ENCODE measurements at regions of chr3 and their contacts with region 1.

Region 1: DNA sequence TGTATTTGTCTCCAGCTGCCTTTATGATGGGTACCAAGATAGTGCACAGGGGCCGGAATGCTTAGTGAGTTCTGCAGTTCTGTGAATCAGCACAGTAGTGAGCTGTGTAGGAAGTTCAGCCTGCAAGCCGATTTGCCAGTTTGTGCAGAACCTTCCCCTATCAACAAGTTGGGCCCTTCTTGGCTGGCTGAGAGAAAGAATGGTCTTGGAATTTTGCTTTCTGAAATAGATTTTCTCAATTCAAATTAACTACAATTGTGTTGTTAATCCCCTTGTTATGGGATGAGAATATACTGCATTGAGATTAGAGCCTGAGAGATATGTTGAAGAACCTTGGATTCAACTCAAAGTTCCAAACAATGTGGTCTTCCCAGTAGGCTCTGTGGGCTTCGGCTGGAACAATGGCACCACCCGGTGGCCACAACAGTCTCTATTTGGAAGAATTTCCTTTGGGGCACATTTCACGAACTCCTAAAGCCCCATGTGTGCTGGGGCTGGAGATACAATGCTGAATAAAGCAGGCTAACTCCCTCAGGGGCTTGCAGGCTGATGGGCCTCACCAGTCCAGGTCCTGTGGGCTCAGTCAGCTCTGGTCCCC is 59.1 kb downstream of the TRIM42 start:
- DNase-seq: peak; percentile 59
- ATAC-seq: peak; percentile 97
- H3K4me3 ChIP-seq: no peak overlapping the region
- H3K27ac ChIP-seq: no peak overlapping the region
- H3K4me1 ChIP-seq: 0 out of 2 replicates have a peak, but pooled peaks cover 12% of the 10 kb centered on the region
- H3K27me3 ChIP-seq: no peaks in the 10 kb centered on the region; a peak in 1 of 5 replicates
- CTCF ChIP-seq: peak; percentile 92
- EP300 ChIP-seq: no peak
- POLR2A ChIP-seq: no peak
- RAD21 ChIP-seq: peak; percentile 95

Region 2: DNA sequence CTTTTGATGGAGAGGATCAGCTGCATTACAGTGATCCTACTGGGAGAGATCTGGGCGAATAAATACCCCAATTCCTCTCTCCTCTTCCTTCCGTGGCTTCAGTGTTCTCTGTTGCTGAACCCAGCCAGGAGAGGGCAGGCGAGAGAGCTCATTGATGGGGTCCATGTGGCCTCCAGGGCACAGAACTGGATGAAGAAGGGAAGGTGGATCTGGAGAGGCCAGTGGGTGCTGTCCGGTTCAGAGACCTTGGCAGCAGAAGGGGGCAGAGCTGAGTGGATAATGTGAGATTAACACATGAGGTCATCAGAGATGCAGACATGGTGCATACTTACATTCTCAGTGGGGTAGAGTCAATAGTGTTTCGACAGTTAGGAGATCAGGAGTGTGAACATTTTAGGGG is 608.3 kb before region 1 on chr3:
- CTCF ChIA-PET with region 1: interaction called, 11 read pairs
- POLR2A ChIA-PET with region 1: no interaction called
- in situ Hi-C with region 1: loop called (anchors 10 kb)
- intact Hi-C with region 1: loop called (anchors 1 kb)
- DNase-seq: peak; percentile 25
- ATAC-seq: peak; percentile 98
- H3K4me3 ChIP-seq: no peak overlapping the region
- H3K27ac ChIP-seq: no peak overlapping the region
- H3K4me1 ChIP-seq: no peaks in the 10 kb centered on the region
- H3K27me3 ChIP-seq: no peaks in the 10 kb centered on the region
- CTCF ChIP-seq: peak; percentile 78
- EP300 ChIP-seq: no peak
- POLR2A ChIP-seq: no peak
- RAD21 ChIP-seq: peak; percentile 52; the same call in 1 of the 2 replicates

Region 3: DNA sequence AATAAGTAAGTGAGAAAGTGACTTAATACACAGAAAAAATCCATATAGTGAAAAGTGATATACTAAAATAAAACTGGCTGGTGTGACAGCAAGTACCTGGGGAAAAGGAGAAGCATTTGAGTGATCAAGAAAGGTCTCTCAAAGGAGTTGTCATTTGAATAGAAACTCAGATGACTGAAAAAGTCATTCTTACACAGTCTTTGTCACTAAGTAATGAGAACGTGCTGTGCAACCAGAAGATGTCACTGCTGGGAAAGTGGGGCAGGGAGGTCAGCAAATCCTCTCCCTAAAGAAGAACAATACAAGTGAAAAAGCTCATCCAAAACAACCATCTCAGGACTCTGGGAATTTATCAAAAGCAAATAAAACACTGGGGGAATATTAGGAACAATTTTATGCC is 376.6 kb before region 1 on chr3:
- CTCF ChIA-PET with region 1: no interaction called
- POLR2A ChIA-PET with region 1: no interaction called
- in situ Hi-C with region 1: no loop called
- intact Hi-C with region 1: loop called (anchors 1 kb)
- DNase-seq: no peak
- ATAC-seq: no peak
- H3K4me3 ChIP-seq: no peak overlapping the region
- H3K27ac ChIP-seq: no peak overlapping the region
- H3K4me1 ChIP-seq: no peaks in the 10 kb centered on the region
- H3K27me3 ChIP-seq: no peaks in the 10 kb centered on the region
- CTCF ChIP-seq: peak; percentile 25; the same call in 1 of the 2 replicates
- EP300 ChIP-seq: no peak
- POLR2A ChIP-seq: no peak
- RAD21 ChIP-seq: no peak

Region 4: GRCh38 chr3:140552898-140553297 is 184.1 kb before region 1 on chr3:
- CTCF ChIA-PET with region 1: interaction called, 10 read pairs
- POLR2A ChIA-PET with region 1: no interaction called
- in situ Hi-C with region 1: loop called (anchors 25 kb)
- intact Hi-C with region 1: loop called (anchors 1 kb)
- DNase-seq: peak; percentile 12
- ATAC-seq: peak; percentile 59
- H3K4me3 ChIP-seq: no peak overlapping the region
- H3K27ac ChIP-seq: no peak overlapping the region
- H3K4me1 ChIP-seq: no peaks in the 10 kb centered on the region
- H3K27me3 ChIP-seq: no peaks in the 10 kb centered on the region
- CTCF ChIP-seq: peak; percentile 58
- EP300 ChIP-seq: no peak
- POLR2A ChIP-seq: no peak
- RAD21 ChIP-seq: no peak

Region 5: GRCh38 chr3:140636406-140637130 is 100.4 kb before region 1 on chr3:
- CTCF ChIA-PET with region 1: interaction called, 3 read pairs
- POLR2A ChIA-PET with region 1: no interaction called
- in situ Hi-C with region 1: loop called (anchors 10 kb)
- intact Hi-C with region 1: loop called (anchors 5 kb)
- DNase-seq: no peak
- ATAC-seq: no peak
- H3K4me3 ChIP-seq: no peak overlapping the region
- H3K27ac ChIP-seq: no peak overlapping the region
- H3K4me1 ChIP-seq: peaks cover 13% of the 10 kb centered on the region
- H3K27me3 ChIP-seq: no peaks in the 10 kb centered on the region
- CTCF ChIP-seq: no peak
- EP300 ChIP-seq: no peak
- POLR2A ChIP-seq: no peak
- RAD21 ChIP-seq: no peak

Region 6: DNA sequence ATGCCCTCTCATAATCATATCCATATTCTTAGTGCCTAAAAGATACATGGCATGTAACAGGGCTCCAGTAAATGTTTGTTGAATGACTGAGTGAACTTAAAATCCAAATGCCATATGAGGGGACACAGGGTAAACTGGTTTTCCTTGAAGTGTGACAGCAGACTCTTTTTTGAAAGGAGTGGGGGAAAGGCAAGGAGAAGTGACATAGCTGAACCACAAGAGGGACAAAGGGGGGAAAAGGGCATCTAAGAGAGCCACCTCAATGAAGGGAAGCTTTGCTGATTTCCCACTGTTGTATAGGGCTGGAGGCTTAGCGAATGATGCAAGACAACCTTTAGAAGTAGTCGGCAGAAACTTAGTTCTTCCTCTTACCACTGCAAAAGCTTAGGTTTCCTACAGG is 50.0 kb before region 1 on chr3:
- CTCF ChIA-PET with region 1: no interaction called
- POLR2A ChIA-PET with region 1: no interaction called
- in situ Hi-C with region 1: no loop called
- intact Hi-C with region 1: no loop called
- DNase-seq: no peak
- ATAC-seq: no peak; the same call in 2 of the 3 replicates
- H3K4me3 ChIP-seq: no peak overlapping the region
- H3K27ac ChIP-seq: no peak overlapping the region
- H3K4me1 ChIP-seq: no peaks in the 10 kb centered on the region
- H3K27me3 ChIP-seq: no peaks in the 10 kb centered on the region
- CTCF ChIP-seq: no peak
- EP300 ChIP-seq: no peak
- POLR2A ChIP-seq: no peak
- RAD21 ChIP-seq: no peak

Measured in HepG2 (cell line).